ENCODE measurements at regions of chr3 and their contacts with region 1.

Region 1: DNA sequence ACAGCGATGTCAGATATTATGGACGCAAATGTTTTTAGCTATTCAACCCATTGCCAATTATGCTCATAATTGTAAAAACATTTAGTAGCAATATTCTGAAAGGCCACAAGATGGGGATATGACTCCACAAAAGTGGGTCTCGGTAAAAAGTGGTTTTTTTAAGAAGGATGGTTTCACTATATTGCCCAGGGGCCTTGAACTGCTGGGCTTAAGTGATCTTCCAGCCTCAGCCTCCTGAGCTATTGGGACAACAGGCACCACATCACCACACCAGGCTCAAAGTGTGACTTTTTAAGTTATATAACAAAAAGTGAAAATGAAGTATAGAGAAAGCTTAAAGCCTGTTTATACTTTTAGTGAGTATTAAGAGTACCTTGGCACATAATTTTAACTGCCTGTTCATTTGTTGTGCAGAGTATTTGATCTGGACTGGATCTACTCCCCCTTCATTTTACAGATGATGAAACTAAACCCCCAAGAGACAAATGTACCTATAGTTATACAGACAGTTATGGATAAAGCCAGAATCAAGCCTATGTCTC is 9.4 kb downstream of the NAA50 start:
- DNase-seq: no peak
- ATAC-seq: peak; percentile 76 to 82

Region 2: DNA sequence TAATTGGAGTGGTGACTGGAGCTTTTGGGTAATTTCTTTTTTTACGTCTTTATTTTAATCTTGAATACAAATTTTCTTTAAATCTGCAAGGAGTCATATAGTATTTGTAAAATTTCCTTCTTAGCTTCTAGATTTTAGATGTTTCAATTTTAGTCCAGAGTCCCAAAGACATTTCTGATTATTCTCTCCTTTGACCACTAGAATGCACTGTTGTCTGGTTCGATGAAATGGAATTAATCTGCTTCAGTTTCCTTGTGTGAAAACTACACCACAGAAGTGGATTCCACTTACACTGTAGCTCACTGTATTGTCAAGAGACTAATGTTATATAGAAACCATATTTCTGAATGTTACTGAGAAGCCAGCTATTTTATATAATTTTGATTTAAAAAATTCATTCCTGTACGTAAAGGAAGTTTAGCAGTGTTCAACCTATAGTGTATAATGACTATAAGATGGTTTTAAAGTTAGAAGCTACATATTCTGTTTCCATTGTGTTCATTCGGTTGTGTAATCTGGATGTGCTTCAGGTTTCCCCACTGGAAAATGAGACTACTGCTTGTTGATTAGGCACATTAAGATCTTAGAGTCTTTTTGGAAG is 108.1 kb after region 1 on chr3:
- intact Hi-C with region 1: loop called in 1 of 2 experiments (anchors 10 kb)
- DNase-seq: no peak
- ATAC-seq: no peak